ENCODE measurements at regions of chr22 and their contacts with region 1.

Region 1: DNA sequence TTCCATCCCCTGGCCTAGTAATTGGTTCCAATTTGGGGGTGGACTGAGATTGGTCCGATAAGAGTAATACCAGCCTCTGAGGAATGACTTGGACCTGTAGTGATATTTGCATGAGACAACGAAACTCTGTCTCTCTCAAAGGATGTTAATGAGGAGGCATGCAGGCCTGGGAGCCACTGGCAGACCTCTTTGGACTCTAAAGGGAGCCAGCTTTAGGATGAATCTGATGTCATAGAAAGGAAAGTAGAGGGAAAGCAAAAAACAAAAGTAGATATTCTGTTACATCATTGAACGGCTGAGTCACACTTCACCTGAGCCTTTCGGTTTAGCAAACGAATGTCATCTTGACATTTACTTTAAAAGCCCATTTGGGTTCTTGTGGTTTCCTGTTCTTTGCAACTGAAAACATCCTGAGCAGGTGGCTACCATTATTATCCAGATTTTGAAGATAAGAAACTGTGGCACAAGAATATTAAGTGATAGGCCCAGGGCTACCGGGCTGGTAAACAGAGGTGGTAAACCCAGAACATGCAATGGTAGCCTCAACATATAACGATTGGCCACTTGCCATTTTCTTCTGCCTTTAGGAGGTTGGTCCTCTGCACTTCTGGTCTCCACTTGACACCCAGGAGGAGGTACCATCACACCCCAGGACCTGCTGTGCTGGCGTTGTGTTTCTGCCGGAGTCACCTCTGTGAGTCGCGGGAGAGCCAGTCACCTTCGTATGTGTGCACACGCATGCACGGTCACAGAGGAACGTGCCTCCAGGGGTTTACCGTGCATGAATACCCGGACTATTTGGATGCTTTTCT is 42.7 kb downstream of the RTL6 start:
- DNase-seq: peak; percentile 72
- ATAC-seq: peak; percentile 69
- H3K4me3 Mint-ChIP-seq: peak overlapping the region; percentile 34
- H3K27ac Mint-ChIP-seq: peak overlapping the region; percentile 93
- H3K4me1 Mint-ChIP-seq: peaks cover 33% of the 10 kb centered on the region
- H3K27me3 Mint-ChIP-seq: no peaks in the 10 kb centered on the region

Region 2: DNA sequence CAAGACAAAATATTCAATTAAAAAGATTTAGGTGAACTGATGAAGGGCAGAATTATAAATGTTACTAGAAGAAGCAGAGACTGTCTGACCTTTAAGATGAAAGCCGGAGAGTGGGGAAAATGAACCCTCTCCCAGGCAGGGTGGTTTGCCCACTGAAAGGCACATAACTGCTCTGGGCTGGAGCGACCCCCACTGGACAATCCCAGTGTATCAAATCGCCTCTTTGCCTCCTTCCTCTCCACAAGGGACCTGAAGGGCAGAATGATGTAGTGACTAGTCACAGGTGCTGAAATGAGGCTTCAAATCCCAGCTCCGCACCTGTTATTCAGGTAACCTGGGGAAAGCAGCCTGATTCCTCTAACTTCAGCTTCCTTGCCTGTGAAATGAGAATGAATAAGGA is 712.2 kb before region 1 on chr22:
- CTCF ChIA-PET with region 1: no interaction called
- POLR2A ChIA-PET with region 1: no interaction called
- intact Hi-C with region 1: no loop called
- DNase-seq: peak; percentile 11
- ATAC-seq: no peak
- H3K4me3 Mint-ChIP-seq: no peak overlapping the region
- H3K27ac Mint-ChIP-seq: no peak overlapping the region
- H3K4me1 Mint-ChIP-seq: no peaks in the 10 kb centered on the region
- H3K27me3 Mint-ChIP-seq: peaks cover 4% of the 10 kb centered on the region

Region 3: GRCh38 chr22:44192098-44192810 is 263.1 kb before region 1 on chr22:
- CTCF ChIA-PET with region 1: no interaction called
- POLR2A ChIA-PET with region 1: no interaction called
- intact Hi-C with region 1: loop called in 1 of 2 experiments (anchors 5 kb)
- DNase-seq: peak; percentile 74
- ATAC-seq: peak; percentile 34
- H3K4me3 Mint-ChIP-seq: no peak overlapping the region
- H3K27ac Mint-ChIP-seq: peak overlapping the region; percentile 37
- H3K4me1 Mint-ChIP-seq: peaks cover 36% of the 10 kb centered on the region
- H3K27me3 Mint-ChIP-seq: no peaks in the 10 kb centered on the region

Region 4: DNA sequence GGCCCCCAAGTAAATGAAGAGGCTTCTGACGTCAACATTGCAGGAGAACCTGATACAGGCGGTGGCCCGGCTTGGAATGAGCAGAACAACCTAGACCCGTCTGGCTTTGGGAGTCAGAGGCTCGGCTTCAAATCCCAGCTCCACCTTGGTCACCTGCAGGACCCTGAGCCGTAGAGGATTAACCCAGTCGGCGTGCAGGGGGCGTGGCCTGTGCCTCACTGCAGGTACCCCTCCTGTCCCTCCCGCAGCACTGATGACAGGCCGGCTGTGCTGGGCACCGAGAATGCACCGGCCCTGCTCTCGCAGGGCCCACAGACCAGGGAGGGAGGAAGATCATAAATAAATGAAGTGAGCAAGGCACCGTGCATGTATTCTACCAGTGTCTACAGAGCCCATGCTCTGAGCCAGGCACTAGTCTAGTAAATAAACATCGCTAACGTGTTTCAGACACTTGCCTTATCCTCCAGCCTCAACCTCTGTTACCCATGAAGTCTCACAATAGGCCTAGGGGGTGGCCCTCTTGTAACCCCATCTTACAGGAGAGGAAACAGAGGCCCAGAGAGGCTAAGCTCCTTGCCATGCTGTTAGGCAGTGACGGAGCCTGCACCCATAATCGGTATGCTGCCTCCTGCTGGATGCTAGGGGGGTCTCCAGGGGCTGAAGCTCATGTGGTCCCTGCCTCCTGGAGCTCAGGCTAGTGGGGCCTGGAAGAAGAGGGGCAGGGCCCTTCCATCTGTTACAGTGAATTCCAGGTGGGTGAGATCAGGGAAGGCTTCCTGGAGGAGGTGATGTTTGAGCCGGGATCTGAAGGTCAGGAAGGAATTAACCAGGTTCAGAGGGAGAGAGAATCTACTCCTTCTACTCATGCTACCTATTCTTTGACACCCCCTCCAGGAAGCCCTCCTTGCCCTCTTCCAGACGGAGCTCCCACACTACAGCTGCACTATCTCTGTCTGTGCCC is 10.7 kb before region 1 on chr22:
- CTCF ChIA-PET with region 1: no interaction called
- POLR2A ChIA-PET with region 1: no interaction called
- intact Hi-C with region 1: no loop called
- DNase-seq: no peak
- ATAC-seq: no peak
- H3K4me3 Mint-ChIP-seq: no peak overlapping the region
- H3K27ac Mint-ChIP-seq: no peak overlapping the region
- H3K4me1 Mint-ChIP-seq: no peaks in the 10 kb centered on the region
- H3K27me3 Mint-ChIP-seq: no peaks in the 10 kb centered on the region

Region 5: GRCh38 chr22:44475706-44476105 is 20.3 kb after region 1 on chr22:
- CTCF ChIA-PET with region 1: no interaction called
- POLR2A ChIA-PET with region 1: no interaction called
- intact Hi-C with region 1: loop called in 1 of 2 experiments (anchors 2 kb)
- DNase-seq: no peak
- ATAC-seq: no peak
- H3K4me3 Mint-ChIP-seq: no peak overlapping the region
- H3K27ac Mint-ChIP-seq: no peak overlapping the region
- H3K4me1 Mint-ChIP-seq: peaks cover 4% of the 10 kb centered on the region
- H3K27me3 Mint-ChIP-seq: peaks cover 5% of the 10 kb centered on the region

Region 6: DNA sequence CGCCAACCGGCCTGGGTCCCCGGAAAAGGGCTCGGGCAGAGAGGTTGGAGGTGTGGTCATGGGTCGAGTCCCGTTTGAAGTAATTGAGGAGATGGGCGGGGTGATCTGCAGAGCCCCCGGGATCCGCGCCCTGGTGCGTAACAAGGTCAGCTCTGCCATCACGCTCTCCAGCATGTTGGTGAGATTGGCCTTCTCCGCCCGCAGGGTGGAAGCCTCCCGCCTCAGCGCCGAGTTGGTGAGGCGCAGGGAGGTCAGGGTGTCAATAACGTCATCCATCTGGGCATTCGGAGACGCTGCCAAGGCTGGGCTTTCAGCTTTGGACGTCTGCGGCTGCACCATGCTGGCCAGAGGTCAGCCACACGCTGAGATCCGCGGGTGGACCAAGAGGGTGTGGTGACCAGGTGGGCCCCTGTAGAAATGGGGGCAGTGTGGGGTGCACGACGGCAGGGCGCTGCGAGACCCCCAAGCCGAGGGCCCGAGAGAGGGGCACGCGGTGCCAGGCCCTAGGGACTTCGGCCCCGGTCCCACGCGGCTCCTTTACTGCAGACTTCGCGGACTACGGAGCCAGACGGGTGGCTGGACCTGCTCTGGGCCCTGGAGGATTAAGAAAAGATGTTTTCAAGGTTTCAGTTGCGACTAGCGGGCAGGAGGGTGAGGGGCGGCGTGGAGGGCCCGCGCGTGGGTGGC is 42.0 kb after region 1 on chr22:
- CTCF ChIA-PET with region 1: no interaction called
- POLR2A ChIA-PET with region 1: no interaction called
- intact Hi-C with region 1: loop called (anchors 1 to 5 kb)
- DNase-seq: no peak
- ATAC-seq: no peak
- H3K4me3 Mint-ChIP-seq: peak overlapping the region; percentile 68
- H3K27ac Mint-ChIP-seq: peak overlapping the region; percentile 47
- H3K4me1 Mint-ChIP-seq: peaks cover 30% of the 10 kb centered on the region
- H3K27me3 Mint-ChIP-seq: no peaks in the 10 kb centered on the region

Region 7: GRCh38 chr22:44620129-44620840 is 164.9 kb after region 1 on chr22:
- CTCF ChIA-PET with region 1: no interaction called
- POLR2A ChIA-PET with region 1: no interaction called
- intact Hi-C with region 1: loop called in 1 of 2 experiments (anchors 5 kb)
- DNase-seq: peak; percentile 89
- ATAC-seq: peak; percentile 76
- H3K4me3 Mint-ChIP-seq: no peak overlapping the region
- H3K27ac Mint-ChIP-seq: peak overlapping the region; percentile 68
- H3K4me1 Mint-ChIP-seq: no peaks in the 10 kb centered on the region
- H3K27me3 Mint-ChIP-seq: no peaks in the 10 kb centered on the region